Activated CD4-positive, alpha-beta T cell treated with anti-CD3 and anti-CD28 coated beads, Interleukin-2, amount 10 ng/mL, durations not matched to agents 24 days and 14 days (primary cell): ENCODE measurements at regions of chr12 and their contacts with region 1.

Region 1: GRCh38 chr12:14365294-14366208 is at the start of gene ATF7IP:
- DNase-seq: peak; percentile 99
- H3K4me3 Mint-ChIP-seq: peak within 1 kb of the TSS; percentile 82
- H3K27ac Mint-ChIP-seq: peak within 1 kb of the TSS; percentile 95
- H3K4me1 Mint-ChIP-seq: peaks cover 37% of the 10 kb centered on the region
- H3K27me3 Mint-ChIP-seq: no peaks in the 10 kb centered on the region
- total RNA-seq, gene ATF7IP: 62.6 and 72.4 TPM in 2 replicates

Region 2: DNA sequence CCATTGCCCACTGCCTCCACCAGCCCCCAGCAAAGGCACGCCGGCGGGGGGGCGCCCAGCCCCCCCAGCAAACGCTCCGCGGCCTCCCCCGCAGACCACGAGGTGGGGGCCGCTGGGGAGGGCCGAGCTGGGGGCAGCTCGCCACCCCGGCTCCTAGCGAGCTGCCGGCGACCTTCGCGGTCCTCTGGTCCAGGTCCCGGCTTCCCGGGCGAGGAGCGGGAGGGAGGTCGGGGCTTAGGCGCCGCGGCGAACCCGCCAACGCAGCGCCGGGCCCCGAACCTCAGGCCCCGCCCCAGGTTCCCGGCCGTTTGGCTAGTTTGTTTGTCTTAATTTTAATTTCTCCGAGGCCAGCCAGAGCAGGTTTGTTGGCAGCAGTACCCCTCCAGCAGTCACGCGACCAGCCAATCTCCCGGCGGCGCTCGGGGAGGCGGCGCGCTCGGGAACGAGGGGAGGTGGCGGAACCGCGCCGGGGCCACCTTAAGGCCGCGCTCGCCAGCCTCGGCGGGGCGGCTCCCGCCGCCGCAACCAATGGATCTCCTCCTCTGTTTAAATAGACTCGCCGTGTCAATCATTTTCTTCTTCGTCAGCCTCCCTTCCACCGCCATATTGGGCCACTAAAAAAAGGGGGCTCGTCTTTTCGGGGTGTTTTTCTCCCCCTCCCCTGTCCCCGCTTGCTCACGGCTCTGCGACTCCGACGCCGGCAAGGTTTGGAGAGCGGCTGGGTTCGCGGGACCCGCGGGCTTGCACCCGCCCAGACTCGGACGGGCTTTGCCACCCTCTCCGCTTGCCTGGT is 1648.6 kb before region 1 on chr12 and contains the start of gene CDKN1B:
- intact Hi-C with region 1: loop called (anchors 5 kb)
- DNase-seq: peak; percentile 94
- H3K4me3 Mint-ChIP-seq: peak within 1 kb of the TSS; percentile 97
- H3K27ac Mint-ChIP-seq: peak within 1 kb of the TSS; percentile 99
- H3K4me1 Mint-ChIP-seq: peaks cover 57% of the 10 kb centered on the region
- H3K27me3 Mint-ChIP-seq: no peaks in the 10 kb centered on the region
- total RNA-seq, gene CDKN1B: 47.4 and 48.5 TPM in 2 replicates

Region 3: GRCh38 chr12:13940335-13940865 is 425.2 kb before region 1 on chr12:
- intact Hi-C with region 1: no loop called
- DNase-seq: no peak
- H3K4me3 Mint-ChIP-seq: no peak overlapping the region
- H3K27ac Mint-ChIP-seq: no peak overlapping the region
- H3K4me1 Mint-ChIP-seq: no peaks in the 10 kb centered on the region
- H3K27me3 Mint-ChIP-seq: peaks cover 5% of the 10 kb centered on the region

Region 4: DNA sequence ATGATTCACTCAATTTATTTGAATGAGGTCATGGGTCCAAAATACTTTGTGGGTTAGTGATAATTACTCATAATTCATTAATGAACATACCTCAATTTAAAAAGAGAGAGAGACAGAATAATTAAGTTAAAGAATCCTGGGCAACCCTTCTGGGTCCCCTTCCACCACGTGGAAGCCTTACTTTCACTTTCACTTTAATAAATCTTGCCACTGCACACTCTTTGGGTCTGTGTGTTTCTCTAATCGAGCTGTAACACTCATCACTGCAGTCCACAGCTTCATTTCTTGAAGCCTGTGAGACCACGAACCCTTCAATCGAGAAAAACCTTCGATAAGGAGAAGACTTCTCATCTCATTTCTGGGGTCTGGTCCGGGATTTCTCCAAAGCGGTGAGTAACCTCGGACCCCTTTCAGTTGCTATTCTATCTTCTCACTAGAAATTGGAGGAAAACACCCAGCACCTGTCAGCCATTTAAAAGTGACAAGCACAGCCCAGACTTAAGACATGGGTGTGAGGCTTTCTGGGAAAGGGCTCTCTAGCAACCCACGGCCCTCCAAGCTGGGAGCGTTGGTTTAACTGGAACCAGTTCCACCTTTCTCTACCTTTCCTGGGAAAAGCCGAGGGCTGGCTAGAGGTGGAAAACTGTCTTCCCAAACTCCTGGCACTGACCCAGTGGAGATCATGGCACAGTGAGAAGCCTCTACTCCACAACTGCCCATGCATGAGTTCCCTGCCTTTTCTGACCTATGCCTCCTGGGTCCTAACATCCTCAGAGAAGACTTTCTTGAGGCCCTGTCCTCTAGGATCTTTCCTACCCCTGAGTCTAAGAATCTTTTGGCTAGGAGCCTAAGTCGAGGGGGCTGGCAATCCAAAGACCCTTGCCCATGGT is 148.9 kb before region 1 on chr12:
- intact Hi-C with region 1: loop called (anchors 1 kb)
- DNase-seq: no peak
- H3K4me3 Mint-ChIP-seq: peak overlapping the region; percentile 23
- H3K27ac Mint-ChIP-seq: no peak overlapping the region
- H3K4me1 Mint-ChIP-seq: peaks cover 13% of the 10 kb centered on the region
- H3K27me3 Mint-ChIP-seq: no peaks in the 10 kb centered on the region

Region 5: DNA sequence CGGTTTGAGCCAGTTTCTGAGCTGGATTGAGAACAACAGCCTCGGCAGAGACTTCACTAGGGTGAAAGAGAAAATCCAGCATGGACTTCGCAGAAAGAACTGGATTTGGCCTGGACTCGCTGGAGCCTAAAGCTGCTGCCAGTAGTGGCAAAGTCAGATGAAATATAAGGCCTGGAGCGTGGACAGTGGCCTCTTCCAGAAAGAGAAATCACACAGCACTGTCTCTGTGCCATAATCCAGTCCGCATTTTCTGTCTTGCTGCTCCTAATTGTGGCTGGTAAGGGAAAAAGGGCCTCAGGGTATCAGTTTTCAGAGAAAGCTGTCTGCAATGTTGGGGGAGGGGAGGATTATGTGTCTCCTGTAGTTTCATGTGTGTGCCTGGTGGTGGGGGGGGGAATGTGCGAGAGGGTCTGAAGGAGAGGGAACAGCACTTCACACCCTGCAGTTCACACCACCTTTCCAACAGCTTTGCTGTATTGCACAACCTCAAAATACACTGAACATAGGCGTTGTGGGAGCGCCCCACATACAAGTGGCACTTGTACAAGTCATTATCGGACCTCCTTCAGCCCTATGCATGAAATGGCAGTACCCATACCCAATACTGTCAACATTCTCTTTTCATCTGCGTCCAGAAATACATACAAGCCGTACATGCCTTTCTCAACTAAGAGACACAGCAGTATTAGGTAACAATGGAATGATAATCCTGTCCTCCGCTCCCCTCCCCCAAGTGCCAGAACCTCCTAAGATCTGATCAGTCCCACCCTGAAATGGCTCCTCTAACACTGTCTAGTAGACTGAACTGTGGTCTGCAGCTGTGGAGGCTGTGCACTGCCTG is 107.6 kb before region 1 on chr12:
- intact Hi-C with region 1: loop called (anchors 1 kb)
- DNase-seq: peak; percentile 95
- H3K4me3 Mint-ChIP-seq: peak overlapping the region; percentile 81
- H3K27ac Mint-ChIP-seq: peak overlapping the region; percentile 99
- H3K4me1 Mint-ChIP-seq: peaks cover 45% of the 10 kb centered on the region
- H3K27me3 Mint-ChIP-seq: no peaks in the 10 kb centered on the region

Region 6: GRCh38 chr12:14394317-14395073 is 28.9 kb after region 1 on chr12:
- intact Hi-C with region 1: loop called (anchors 1 kb)
- DNase-seq: peak; percentile 84
- H3K4me3 Mint-ChIP-seq: peak overlapping the region; percentile 78
- H3K27ac Mint-ChIP-seq: peak overlapping the region; percentile 93
- H3K4me1 Mint-ChIP-seq: peaks cover 59% of the 10 kb centered on the region
- H3K27me3 Mint-ChIP-seq: no peaks in the 10 kb centered on the region

Region 7: GRCh38 chr12:14443531-14443930 is 78.0 kb after region 1 on chr12:
- intact Hi-C with region 1: no loop called
- DNase-seq: no peak
- H3K4me3 Mint-ChIP-seq: no peak overlapping the region
- H3K27ac Mint-ChIP-seq: no peak overlapping the region
- H3K4me1 Mint-ChIP-seq: peaks cover 7% of the 10 kb centered on the region
- H3K27me3 Mint-ChIP-seq: no peaks in the 10 kb centered on the region

Region 8: DNA sequence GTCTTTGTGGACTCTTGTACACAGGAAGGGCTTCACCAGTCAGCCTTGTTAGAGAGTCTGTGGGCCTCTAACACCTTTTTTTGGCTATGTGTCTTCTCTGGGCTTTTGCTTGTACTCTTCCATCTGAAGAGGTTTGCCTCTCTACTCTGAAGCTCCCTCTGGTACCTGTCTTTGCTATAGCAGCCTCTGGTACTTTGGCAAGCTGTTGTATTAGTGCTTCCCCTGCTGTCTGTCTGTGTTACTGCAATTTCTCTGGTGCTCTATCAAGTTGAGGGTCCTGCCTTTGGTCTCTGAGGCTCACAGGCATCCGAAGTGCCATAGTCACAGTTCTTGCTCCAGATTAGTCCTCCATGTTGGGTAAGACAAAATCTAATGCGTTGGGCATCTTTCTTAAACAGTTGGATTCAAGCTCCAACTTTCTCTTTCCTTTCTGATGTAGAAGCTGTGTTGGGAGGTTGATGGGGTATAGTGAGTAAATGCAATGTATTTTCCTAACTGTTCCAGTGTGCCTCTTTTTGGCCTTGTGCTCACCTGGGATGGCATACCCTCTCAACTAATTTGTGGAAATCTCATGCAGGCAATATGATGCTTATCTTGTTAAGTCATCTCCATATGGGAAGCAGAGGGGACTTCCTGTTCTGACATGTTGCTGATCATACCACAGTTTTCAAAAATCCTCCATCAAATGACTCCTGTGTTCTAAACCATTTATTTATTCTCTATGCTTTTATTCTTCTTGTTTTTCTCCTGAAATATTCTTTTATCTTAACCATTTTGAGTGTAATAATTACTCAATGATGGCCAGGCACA is 88.8 kb after region 1 on chr12:
- intact Hi-C with region 1: loop called (anchors 1 kb)
- DNase-seq: peak; percentile 80
- H3K4me3 Mint-ChIP-seq: peak overlapping the region; percentile 39
- H3K27ac Mint-ChIP-seq: peak overlapping the region; percentile 69
- H3K4me1 Mint-ChIP-seq: peaks cover 47% of the 10 kb centered on the region
- H3K27me3 Mint-ChIP-seq: no peaks in the 10 kb centered on the region

Region 9: DNA sequence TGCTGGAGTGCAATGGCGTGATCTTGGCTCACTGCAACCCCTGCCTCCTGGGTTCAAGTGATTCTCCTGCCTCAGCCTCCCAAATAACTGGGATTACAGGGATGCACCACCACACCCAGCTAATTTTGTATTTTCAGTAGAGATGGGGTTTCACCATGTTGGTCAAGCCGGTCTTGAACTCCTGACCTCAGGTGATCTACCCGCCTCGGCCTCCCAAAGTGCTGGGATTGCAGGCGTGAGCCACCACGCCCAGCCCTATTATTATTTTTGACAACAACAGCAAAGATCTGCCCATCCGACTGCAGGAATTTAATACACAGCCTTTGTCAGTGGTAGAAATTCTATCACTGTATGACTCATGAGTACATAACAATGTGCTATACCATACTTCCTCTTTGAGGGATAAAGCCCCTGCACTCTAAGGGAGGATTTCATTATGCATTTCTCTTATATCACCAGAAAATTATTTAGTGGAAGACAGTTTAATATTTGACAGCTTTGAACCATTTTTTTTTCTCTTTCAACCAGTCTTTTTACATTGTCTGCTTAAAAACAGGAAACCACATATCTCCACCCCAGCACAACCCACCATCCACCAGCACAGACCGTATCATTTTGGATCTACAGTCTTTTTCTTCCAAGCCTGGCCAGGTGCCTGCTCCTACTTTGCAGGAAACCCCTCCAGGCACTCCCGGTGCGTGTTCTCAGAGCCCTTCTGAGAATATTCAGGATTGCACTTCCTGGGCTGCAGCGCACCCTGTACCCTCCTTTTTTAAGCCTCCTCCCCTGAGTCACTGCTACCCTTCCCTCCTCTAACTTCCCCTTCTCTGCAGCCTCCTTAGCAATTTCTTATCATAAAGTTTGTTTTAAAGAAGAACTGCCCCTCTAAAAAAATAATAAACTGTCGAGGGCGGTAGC is 595.3 kb after region 1 on chr12:
- intact Hi-C with region 1: loop called (anchors 2 kb)
- DNase-seq: peak; percentile 85
- H3K4me3 Mint-ChIP-seq: peak overlapping the region; percentile 99
- H3K27ac Mint-ChIP-seq: peak overlapping the region; percentile 100
- H3K4me1 Mint-ChIP-seq: peaks cover 60% of the 10 kb centered on the region
- H3K27me3 Mint-ChIP-seq: no peaks in the 10 kb centered on the region